Endothelial cell of umbilical vein (primary cell): ENCODE measurements at regions of chr3 and their contacts with region 1.

Region 1: GRCh38 chr3:52934630-52935530 is 37.5 kb upstream of the STIMATE start:
- DNase-seq: peak; percentile 59
- H3K4me3 ChIP-seq: no peak overlapping the region
- H3K27ac ChIP-seq: no peak overlapping the region
- H3K4me1 ChIP-seq: no peaks in the 10 kb centered on the region
- H3K27me3 ChIP-seq: no peaks in the 10 kb centered on the region
- CTCF ChIP-seq: peak; percentile 65 to 72
- POLR2A ChIP-seq: no peak

Region 2: DNA sequence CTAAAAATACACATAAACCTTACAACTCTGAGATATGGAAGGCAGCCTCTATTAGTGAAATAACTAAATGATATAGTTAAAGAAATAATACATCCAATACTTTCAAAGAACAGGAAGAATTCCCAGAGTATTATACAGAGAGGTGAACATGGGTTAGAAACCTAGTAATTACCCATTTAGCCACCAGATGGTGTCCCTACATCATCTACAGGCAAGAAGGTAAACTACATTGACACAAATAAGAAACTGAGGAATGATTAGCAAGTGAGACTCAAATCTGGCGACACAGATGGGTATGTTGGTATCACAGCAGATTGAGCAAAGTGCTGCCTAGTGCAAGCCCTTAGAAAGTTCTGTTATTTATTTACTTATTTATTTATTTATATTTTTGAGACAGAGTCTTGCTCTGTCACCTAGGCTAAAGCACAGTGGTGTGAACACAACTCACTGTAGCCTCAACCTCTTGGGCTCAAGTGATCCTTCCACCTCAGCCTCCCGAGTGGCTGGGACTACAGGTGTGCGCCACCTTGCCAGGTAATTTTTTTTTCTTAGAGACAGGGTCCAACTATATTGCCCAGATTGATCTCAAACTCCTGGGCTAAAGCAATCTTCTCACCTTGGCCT is 192.3 kb before region 1 on chr3:
- CTCF ChIA-PET with region 1: interaction called, 11 read pairs
- POLR2A ChIA-PET with region 1: no interaction called
- dilution Hi-C with region 1: no loop called
- intact Hi-C with region 1: loop called (anchors 2 kb)
- DNase-seq: peak; percentile 58
- H3K4me3 ChIP-seq: no peak overlapping the region
- H3K27ac ChIP-seq: no peak overlapping the region
- H3K4me1 ChIP-seq: no peaks in the 10 kb centered on the region
- H3K27me3 ChIP-seq: no peaks in the 10 kb centered on the region
- CTCF ChIP-seq: peak; percentile 36 to 47
- POLR2A ChIP-seq: no peak

Region 3: DNA sequence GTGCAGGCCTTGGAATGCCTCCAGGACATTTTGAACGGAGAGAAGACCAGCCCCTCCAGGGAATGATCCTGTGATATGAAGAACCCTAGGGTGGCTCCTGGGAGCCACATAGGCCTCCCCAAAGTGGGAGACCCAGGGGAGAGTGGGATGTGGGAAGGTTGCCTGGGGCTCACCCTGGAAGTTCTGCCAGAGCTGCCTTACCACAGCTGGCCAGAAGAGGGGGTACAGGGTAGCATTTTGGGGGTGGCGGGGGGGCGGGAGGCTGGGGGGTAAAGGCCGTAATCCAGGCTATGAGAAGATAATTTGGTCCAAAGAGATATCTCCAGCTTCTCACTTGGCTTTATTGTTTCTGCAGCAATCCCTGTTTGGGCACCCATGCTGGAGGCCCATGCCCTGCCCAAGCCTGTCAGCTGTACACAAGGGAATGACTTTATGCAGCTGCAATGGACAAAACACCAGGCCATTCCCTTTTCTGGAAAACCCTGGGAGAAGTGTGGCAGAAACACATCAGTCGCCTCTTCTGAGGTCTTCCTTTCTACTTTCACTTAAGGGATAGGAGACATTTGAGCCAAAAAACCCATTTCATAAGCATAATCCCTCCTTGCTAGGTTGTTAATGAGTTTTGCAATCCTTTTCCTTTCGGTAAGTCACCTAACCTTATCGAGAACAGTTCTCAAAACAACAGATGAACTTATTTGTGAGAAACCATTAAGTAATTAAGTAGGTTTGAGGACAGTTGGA is 89.0 kb before region 1 on chr3:
- CTCF ChIA-PET with region 1: interaction called, 11 read pairs
- POLR2A ChIA-PET with region 1: no interaction called
- dilution Hi-C with region 1: no loop called
- intact Hi-C with region 1: loop called (anchors 1 kb)
- DNase-seq: no peak
- H3K4me3 ChIP-seq: no peak overlapping the region
- H3K27ac ChIP-seq: no peak overlapping the region
- H3K4me1 ChIP-seq: no peaks in the 10 kb centered on the region
- H3K27me3 ChIP-seq: no peaks in the 10 kb centered on the region
- CTCF ChIP-seq: peak in 1 of 2 donors; percentile 47
- POLR2A ChIP-seq: no peak

Region 4: GRCh38 chr3:52851348-52851747 is 83.5 kb before region 1 on chr3:
- CTCF ChIA-PET with region 1: interaction called, 11 read pairs
- POLR2A ChIA-PET with region 1: no interaction called
- dilution Hi-C with region 1: no loop called
- intact Hi-C with region 1: loop called (anchors 1 kb)
- DNase-seq: peak; percentile 39
- H3K4me3 ChIP-seq: no peak overlapping the region
- H3K27ac ChIP-seq: no peak overlapping the region
- H3K4me1 ChIP-seq: no peaks in the 10 kb centered on the region
- H3K27me3 ChIP-seq: no peaks in the 10 kb centered on the region
- CTCF ChIP-seq: peak; percentile 34 to 56
- POLR2A ChIP-seq: no peak

Region 5: GRCh38 chr3:52920841-52921240 is 14.0 kb before region 1 on chr3:
- CTCF ChIA-PET with region 1: interaction called, 21 read pairs
- POLR2A ChIA-PET with region 1: no interaction called
- dilution Hi-C with region 1: no loop called
- intact Hi-C with region 1: no loop called
- DNase-seq: no peak
- H3K4me3 ChIP-seq: no peak overlapping the region
- H3K27ac ChIP-seq: no peak overlapping the region
- H3K4me1 ChIP-seq: peaks cover 11% of the 10 kb centered on the region
- H3K27me3 ChIP-seq: no peaks in the 10 kb centered on the region
- CTCF ChIP-seq: no peak
- POLR2A ChIP-seq: no peak

Region 6: GRCh38 chr3:53072653-53073552 is 138.0 kb after region 1 on chr3:
- CTCF ChIA-PET with region 1: interaction called, 5 read pairs
- POLR2A ChIA-PET with region 1: no interaction called
- dilution Hi-C with region 1: no loop called
- intact Hi-C with region 1: loop called (anchors 2 kb)
- DNase-seq: peak; percentile 73
- H3K4me3 ChIP-seq: peak overlapping the region; percentile 19 to 61 (median 38)
- H3K27ac ChIP-seq: peak overlapping the region; percentile 10
- H3K4me1 ChIP-seq: peaks cover 8% of the 10 kb centered on the region
- H3K27me3 ChIP-seq: peaks cover 0 to 2% of the 10 kb centered on the region in 2 experiments
- CTCF ChIP-seq: peak; percentile 98
- POLR2A ChIP-seq: no peak